Heart right ventricle (tissue), 16 donors: ENCODE measurements at regions of chr20 and their contacts with region 1.

Region 1: GRCh38 chr20:62025832-62026563 is 39.7 kb downstream of the TAF4 start:
- DNase-seq: peak in 1 of 2 donors; percentile 63
- ATAC-seq: peak; percentile 60 to 89 (median 83)
- H3K4me3 ChIP-seq: peak overlapping the region in 1 of 10 donors; percentile 12
- H3K27ac ChIP-seq: peak overlapping the region in 4 of 10 donors; percentile 34 to 61 (median 50)
- H3K4me1 ChIP-seq: peaks cover 23 to 52% (median 38%) of the 10 kb centered on the region in 9 donors
- H3K27me3 ChIP-seq: no peaks in the 10 kb centered on the region
- CTCF ChIP-seq: peak; percentile 27 to 79 (median 64)

Region 2: DNA sequence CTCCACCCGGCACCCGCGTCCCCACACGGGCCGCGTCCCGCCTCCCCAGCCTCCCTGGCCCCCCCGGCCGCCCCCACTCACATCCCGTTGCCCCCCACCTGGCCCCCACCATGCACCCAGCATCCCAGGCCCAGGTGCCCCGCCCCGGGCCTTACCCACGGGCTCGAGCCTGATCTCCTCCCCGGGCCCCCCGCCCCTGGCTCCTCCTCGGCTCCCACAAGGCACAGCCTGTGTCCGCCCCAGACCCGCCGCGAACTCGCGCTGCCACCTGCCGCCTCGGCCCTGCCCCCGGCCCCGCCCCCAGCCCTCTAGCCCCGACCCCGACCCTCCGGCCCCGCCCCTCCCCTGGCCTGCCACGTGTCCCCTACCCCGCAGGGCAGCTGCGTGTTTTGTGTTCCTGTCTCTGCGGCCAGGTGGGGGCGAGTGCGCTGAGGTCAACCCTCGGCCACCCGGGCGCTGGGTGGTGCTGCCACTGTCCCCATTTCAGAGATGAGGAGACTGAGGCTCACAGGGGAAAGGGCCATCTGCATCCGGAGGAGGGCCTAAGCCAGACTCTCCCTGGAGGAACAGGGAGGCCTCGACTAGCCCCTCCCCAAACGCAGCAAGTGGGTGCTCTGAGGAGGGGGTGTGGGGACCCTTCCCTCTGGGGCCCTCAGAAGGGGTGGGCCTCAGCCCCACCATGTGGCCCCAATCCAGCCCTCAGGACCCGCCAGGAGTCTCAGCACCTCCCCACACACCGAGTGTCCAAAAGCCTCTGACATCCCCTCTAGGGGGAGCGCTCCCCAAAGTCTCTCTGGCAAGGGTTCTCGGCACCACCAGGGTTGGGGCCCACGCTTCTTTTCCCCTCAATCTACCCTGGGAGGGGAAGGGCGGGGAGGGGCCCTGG is 60.1 kb before region 1 on chr20:
- intact Hi-C with region 1: no loop called
- DNase-seq: peak in 1 of 2 donors; percentile 2
- ATAC-seq: peak in 2 of 8 donors; percentile 46 to 47
- H3K4me3 ChIP-seq: no peak overlapping the region
- H3K27ac ChIP-seq: no peak overlapping the region
- H3K4me1 ChIP-seq: no peaks in the 10 kb centered on the region
- H3K27me3 ChIP-seq: peaks cover 4 to 33% (median 24%) of the 10 kb centered on the region in 7 donors
- CTCF ChIP-seq: no peak

Region 3: DNA sequence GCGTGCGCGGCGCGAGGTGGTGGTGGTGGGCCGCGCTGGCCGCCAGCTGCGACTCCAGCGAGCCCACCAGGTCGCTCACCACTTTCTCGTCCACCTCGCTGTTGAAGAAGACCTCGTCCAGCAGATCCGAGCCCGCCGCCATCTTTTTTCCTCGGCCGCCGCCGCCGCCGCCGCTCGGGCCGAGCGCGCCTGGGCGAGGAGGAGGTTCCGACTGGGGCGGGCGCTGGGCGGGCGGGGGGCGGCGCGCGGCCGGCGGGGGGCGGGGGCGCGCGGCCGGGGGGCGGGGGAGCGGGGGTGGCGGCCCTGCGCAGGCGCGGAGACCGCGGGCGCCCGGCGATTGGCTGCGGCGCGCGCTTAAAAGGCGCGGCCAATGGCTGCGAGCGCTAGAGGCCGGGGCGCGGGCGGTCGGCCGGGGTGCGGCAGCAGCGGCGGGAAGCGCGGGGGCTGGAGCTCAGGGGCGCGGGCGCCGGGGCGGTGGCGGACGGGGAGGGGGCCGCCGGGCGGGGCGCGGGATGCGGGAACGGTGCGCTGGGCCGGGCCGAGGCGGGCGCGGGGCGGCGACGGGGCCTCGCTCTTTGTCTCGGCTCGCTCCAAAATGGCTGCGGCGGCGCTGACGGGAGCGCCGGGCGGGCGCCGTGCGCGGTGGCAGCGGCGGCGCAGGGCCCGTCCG is 39.8 kb after region 1 on chr20 and contains the start of gene TAF4:
- intact Hi-C with region 1: loop called in 3 of 10 experiments (anchors 5 kb)
- DNase-seq: peak; percentile 67 to 81
- ATAC-seq: peak; percentile 28 to 78 (median 64)
- H3K4me3 ChIP-seq: peak within 1 kb of the TSS; percentile 57 to 88 (median 72)
- H3K27ac ChIP-seq: peak within 1 kb of the TSS; percentile 88 to 98 (median 92)
- H3K4me1 ChIP-seq: peaks cover 8 to 45% (median 35%) of the 10 kb centered on the region in 9 donors
- H3K27me3 ChIP-seq: no peaks in the 10 kb centered on the region
- CTCF ChIP-seq: no peak
- total RNA-seq, gene TAF4: 8.6 to 14.8 (median 11.8) TPM

Region 4: DNA sequence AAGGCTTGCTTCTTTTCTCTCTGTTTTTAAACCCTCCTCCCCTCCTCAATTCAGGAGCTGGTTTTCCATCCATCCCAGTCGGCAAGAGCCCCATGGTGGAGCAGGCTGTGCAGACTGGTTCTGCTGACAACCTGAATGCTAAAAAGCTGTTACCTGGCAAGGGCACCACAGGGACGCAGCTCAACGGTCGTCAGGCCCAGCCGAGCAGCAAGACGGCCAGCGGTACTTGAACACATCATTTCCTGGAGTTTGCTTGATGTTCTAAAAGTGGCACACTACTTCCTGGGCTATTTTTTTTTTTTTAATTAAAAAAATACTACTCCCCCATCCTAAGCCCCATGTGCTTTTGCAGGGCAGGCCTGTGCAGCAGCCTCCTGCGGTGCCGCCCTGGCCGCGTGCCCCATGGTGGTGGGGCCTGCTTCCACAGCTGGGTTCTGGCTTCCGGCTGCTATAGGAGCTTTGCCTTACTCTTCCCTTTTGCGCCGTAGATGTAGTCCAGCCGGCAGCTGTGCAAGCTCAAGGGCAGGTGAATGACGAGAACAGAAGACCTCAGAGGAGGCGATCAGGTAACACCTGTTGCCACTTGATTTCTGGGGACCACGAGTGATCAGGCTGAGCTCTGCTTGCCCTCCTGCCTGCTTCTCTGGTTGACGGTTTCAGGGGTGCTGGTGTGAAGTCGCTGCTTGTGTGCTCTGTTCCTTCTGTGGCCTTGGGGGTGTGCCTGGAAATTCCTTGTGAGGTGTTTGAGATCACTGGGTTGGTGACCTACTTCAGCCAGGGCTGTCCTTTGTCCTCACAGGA is 103.9 kb after region 1 on chr20:
- intact Hi-C with region 1: loop called in 7 of 10 experiments (anchors 5 kb)
- DNase-seq: no peak
- ATAC-seq: no peak
- H3K4me3 ChIP-seq: no peak overlapping the region
- H3K27ac ChIP-seq: peak overlapping the region in 7 of 10 donors; percentile 8 to 46 (median 31)
- H3K4me1 ChIP-seq: peaks cover 23 to 77% (median 53%) of the 10 kb centered on the region in 9 donors
- H3K27me3 ChIP-seq: no peaks in the 10 kb centered on the region
- CTCF ChIP-seq: no peak

Region 5: DNA sequence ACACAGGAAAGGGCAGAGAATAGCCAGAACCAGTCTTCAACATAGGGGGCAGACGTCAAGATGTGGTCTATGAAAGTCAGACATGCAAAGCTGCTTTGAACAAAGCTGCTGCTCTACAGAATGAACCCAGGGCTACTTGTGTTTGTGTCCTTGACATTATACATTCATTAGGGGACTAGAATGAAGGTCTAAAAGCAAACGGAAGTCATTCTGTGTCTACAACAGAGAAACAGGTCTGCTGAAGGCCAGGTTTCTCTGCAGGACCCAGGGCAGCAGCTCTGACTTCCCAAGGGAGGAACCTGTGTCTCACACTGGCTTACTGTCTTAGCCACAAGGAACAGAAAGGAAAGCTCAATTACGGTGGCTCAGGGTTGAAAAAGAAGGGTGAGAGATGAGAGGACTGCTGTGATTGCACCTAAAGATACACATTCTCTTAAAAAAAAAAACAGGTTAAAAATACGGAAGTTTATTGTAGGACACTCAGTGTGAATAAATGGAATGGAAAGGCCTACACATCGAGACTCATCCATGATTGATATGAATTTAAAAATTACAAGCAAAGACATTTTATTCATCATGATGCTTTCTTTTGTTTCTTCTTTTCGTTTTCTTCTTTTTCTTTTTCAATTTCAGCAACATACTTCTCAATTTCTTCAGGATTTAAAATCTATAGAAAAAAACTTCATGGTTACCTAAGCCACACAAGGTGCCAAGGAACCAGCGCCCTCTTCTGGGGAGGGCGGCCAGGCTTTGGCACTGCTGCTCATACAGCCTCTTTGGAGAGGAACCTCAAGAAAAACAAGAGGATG is 110.5 kb after region 1 on chr20:
- intact Hi-C with region 1: loop called in 8 of 10 experiments (anchors 5 kb)
- DNase-seq: peak; percentile 56 to 63
- ATAC-seq: peak in 4 of 8 donors; percentile 28 to 48 (median 42)
- H3K4me3 ChIP-seq: no peak overlapping the region
- H3K27ac ChIP-seq: no peak overlapping the region
- H3K4me1 ChIP-seq: peaks cover 26 to 59% (median 49%) of the 10 kb centered on the region in 9 donors
- H3K27me3 ChIP-seq: no peaks in the 10 kb centered on the region
- CTCF ChIP-seq: peak; percentile 29 to 86 (median 79)

Region 6: GRCh38 chr20:62258499-62259293 is 232.7 kb after region 1 on chr20:
- intact Hi-C with region 1: loop called in 1 of 10 experiments (anchors 10 kb)
- DNase-seq: no peak
- ATAC-seq: peak; percentile 37 to 94 (median 74)
- H3K4me3 ChIP-seq: no peak overlapping the region
- H3K27ac ChIP-seq: peak overlapping the region in 2 of 10 donors; percentile 25 to 30
- H3K4me1 ChIP-seq: peaks cover 0 to 31% (median 16%) of the 10 kb centered on the region in 9 donors
- H3K27me3 ChIP-seq: no peaks in the 10 kb centered on the region
- CTCF ChIP-seq: no peak

Region 7: DNA sequence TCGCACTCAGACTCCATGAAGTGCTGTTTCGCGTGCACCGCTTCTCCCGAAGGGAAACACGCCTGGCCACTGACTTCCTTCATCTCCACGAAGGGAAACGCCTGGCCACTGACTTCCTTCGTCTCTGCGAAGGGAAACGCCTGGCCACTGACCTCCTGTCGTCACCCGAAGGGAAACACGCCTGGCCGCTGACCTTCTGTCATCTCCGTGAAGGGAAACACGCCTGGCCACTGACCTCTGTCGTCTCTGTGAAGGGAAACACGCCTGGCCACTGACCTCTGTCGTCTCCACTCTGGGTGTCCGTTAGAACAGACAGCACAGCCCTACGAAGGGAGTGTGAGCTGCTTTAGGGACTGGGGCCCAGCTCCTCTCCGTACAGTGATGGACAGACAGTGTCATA is 259.7 kb after region 1 on chr20:
- intact Hi-C with region 1: loop called in 1 of 10 experiments (anchors 10 kb)
- DNase-seq: peak; percentile 49 to 54
- ATAC-seq: peak; percentile 25 to 85 (median 40)
- H3K4me3 ChIP-seq: no peak overlapping the region
- H3K27ac ChIP-seq: peak overlapping the region in 9 of 10 donors; percentile 65 to 90 (median 73)
- H3K4me1 ChIP-seq: peaks cover 14 to 56% (median 30%) of the 10 kb centered on the region in 9 donors
- H3K27me3 ChIP-seq: no peaks in the 10 kb centered on the region
- CTCF ChIP-seq: no peak

Region 8: GRCh38 chr20:62386383-62387218 is 360.6 kb after region 1 on chr20 and contains the start of gene RPS21:
- intact Hi-C with region 1: loop called in 1 of 10 experiments (anchors 10 kb)
- DNase-seq: peak; percentile 93 to 95
- ATAC-seq: peak; percentile 91 to 96 (median 95)
- H3K4me3 ChIP-seq: peak within 1 kb of the TSS; percentile 76 to 100 (median 92)
- H3K27ac ChIP-seq: peak within 1 kb of the TSS; percentile 79 to 99 (median 96)
- H3K4me1 ChIP-seq: peaks cover 9 to 47% (median 34%) of the 10 kb centered on the region in 9 donors
- H3K27me3 ChIP-seq: no peaks in the 10 kb centered on the region
- CTCF ChIP-seq: peak in 1 of 9 donors; percentile 12
- total RNA-seq, gene RPS21: 512 to 811 (median 576) TPM